WTC11 (cell line): ENCODE measurements at regions of chr9 and their contacts with region 1.

Region 1: DNA sequence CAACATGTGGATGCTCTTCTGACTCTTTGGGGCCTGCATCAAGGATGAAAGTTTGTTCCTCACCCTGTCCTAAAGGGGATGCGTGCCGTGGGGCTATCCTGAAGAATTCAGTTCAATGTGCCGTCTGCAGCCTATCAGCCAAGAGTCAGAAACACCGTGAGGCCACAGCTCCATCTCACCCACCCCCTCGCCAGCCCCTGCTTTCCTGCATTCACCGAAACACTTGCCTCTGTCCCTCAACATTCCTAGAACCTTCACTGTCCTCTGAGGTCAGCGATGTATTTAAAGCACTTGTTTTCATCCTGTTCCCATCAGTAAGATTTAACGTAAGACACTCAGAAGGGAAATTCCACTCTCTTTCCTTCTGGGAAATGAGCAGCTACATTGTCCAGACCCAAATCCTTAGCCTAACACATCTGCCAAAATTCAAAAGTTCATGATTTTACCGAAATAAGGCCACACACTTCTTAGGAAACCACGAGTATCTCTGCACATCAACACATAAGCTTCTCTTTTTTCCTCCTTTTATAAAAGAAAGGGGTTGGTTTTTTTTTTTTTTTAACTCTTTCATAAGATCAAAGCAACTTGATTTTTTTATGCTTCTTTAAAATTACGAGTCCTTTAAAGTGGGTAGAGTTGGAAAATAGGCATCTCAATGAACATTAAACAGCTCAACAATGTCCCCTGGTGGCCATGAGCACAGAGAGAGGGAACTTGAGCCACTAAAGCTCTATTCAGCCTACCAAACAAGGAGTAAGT is 100.7 kb downstream of the SUSD1 start:
- DNase-seq: peak; percentile 57
- ATAC-seq: peak; percentile 86
- H3K4me3 Mint-ChIP-seq: no peak overlapping the region
- H3K27ac Mint-ChIP-seq: peak overlapping the region; percentile 90
- H3K4me1 Mint-ChIP-seq: peaks cover 17% of the 10 kb centered on the region
- H3K27me3 Mint-ChIP-seq: no peaks in the 10 kb centered on the region
- CTCF ChIP-seq: peak; percentile 50; the same call in 1 of the 2 replicates

Region 2: DNA sequence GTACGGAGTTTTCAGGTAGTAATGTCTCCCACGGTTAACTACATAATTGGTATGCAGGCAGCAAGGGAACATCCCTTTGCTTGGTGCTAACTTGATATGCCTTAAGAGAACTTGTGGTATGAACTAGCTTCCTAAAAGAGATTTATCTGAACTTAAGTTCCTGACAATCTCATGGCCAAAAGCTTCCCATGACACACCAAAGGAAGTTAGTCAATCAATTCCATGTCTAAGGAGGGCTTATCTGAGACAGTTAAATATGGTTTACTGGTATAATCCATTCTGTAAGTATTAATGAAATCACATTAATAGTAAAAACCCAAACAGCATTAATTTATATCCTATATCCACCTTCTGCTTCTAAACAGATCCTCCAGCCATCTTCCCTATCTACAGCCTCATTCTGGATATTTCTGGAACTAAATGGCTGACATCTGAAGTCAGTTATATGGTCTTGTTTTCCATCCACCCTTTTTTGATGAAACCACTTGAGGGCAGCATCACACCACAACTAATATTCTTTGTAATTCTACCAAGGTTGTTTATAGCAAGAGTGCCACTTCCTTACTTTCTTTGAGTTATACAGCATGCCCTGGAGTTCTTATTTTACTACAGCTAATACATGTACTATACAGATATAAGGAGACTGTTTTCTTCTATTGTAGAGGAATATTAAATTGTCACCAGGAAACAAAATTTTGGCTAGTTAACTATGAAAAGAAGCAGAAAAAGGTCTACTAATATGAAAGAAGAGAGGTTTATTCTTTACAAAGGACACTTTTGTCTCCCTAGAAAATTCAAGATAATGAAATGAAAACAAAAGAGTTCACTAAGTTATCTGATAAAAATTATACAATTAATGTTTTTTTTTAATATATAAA is 314.4 kb before region 1 on chr9:
- CTCF ChIA-PET with region 1: interaction called, 48 read pairs
- POLR2A ChIA-PET with region 1: no interaction called
- DNase-seq: peak; percentile 17
- ATAC-seq: peak; percentile 81
- H3K4me3 Mint-ChIP-seq: no peak overlapping the region
- H3K27ac Mint-ChIP-seq: peak overlapping the region; percentile 32
- H3K4me1 Mint-ChIP-seq: peaks cover 7% of the 10 kb centered on the region; the same call in 1 of the 2 replicates
- H3K27me3 Mint-ChIP-seq: no peaks in the 10 kb centered on the region
- CTCF ChIP-seq: peak; percentile 40; the same call in 1 of the 2 replicates

Region 3: DNA sequence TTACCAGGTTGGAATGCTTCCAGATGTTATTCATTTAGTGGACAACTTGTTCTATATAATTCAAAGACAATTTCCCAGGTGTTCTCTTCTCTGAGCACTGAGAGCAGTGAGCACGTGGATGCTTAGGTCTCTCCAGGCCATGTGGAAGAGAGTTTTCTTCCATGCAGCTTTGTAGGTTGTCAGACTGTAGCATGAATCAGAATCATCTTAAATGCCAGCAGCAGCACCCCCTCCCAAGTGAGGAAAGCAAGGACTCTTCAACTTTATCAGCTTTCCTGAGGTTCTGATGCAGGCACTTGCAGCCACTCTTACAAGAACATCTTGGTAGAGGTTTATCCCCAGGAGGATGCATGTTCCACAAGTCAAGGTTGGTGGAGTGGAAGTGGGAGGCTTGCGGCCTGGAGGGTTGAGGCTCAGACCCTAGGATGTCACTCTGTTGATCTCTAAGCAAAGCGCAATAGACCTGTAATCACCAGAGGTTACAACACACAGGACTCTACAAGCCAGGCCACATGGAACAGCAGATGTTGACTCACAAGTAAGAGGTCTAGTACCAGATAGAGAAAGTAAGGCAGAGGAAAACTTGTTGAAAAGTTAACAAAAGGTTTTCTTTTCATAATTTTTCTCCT is 130.1 kb before region 1 on chr9:
- CTCF ChIA-PET with region 1: interaction called, 10 read pairs
- POLR2A ChIA-PET with region 1: no interaction called
- DNase-seq: no peak
- ATAC-seq: no peak
- H3K4me3 Mint-ChIP-seq: no peak overlapping the region
- H3K27ac Mint-ChIP-seq: no peak overlapping the region
- H3K4me1 Mint-ChIP-seq: no peaks in the 10 kb centered on the region
- H3K27me3 Mint-ChIP-seq: no peaks in the 10 kb centered on the region
- CTCF ChIP-seq: no peak